ENCODE measurements at regions of chr12 and their contacts with region 1.

Region 1: GRCh38 chr12:7155481-7156034 is 25.4 kb downstream of the CLSTN3 start:
- DNase-seq: no peak
- H3K4me3 ChIP-seq: no peak overlapping the region
- H3K4me3 Mint-ChIP-seq: no peak overlapping the region
- H3K27ac Mint-ChIP-seq: no peak overlapping the region
- H3K4me1 ChIP-seq: no peaks in the 10 kb centered on the region
- H3K4me1 Mint-ChIP-seq: no peaks in the 10 kb centered on the region
- H3K27me3 ChIP-seq: no peaks in the 10 kb centered on the region
- H3K27me3 Mint-ChIP-seq: no peaks in the 10 kb centered on the region
- CTCF ChIP-seq: no peak

Region 2: GRCh38 chr12:6607751-6608591 is 547.6 kb before region 1 on chr12:
- CTCF ChIA-PET with region 1: no interaction called
- POLR2A ChIA-PET with region 1: no interaction called
- intact Hi-C with region 1: no loop called
- DNase-seq: peak; percentile 76 to 87
- H3K4me3 ChIP-seq: peak overlapping the region; percentile 86
- H3K4me3 Mint-ChIP-seq: no peak overlapping the region
- H3K27ac Mint-ChIP-seq: no peak overlapping the region
- H3K4me1 ChIP-seq: peaks cover 38% of the 10 kb centered on the region
- H3K4me1 Mint-ChIP-seq: peaks cover 20% of the 10 kb centered on the region
- H3K27me3 ChIP-seq: no peaks in the 10 kb centered on the region
- H3K27me3 Mint-ChIP-seq: no peaks in the 10 kb centered on the region
- CTCF ChIP-seq: no peak

Region 3: DNA sequence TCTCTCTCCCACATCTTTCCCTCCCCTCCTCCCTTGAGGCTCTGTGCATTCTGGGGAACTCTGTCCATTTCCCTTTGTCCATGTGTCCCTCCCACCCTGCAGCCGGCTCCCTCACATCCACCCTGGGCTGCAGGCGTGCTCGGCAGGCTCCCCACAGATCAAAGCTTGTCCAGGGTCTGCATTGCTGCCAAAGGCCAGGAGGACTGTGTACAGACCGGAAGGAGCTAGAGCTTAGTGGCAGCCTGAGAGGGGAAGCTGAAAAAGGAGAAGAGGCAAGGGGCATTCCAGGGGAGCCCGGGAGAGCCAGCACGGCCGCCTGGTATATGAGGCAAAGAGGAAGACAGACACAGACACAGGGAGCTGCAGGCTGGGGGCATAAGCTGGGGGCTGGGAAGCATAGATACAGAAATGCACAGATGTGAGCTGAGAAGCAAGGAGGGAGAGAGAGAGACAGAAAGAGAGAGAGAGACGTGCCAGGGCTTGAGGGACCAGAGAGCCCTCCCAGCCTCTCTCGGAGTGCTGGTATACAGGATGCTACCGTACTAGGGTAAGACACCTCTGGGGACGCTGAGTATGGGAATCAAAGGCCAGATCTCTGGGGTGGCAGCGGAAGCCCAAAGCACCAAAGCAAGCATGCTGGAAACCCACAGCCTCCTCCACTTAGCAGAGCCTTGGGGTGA is 362.9 kb before region 1 on chr12:
- CTCF ChIA-PET with region 1: no interaction called
- POLR2A ChIA-PET with region 1: no interaction called
- intact Hi-C with region 1: no loop called
- DNase-seq: no peak
- H3K4me3 ChIP-seq: no peak overlapping the region
- H3K4me3 Mint-ChIP-seq: no peak overlapping the region
- H3K27ac Mint-ChIP-seq: no peak overlapping the region
- H3K4me1 ChIP-seq: no peaks in the 10 kb centered on the region
- H3K4me1 Mint-ChIP-seq: peaks cover 20% of the 10 kb centered on the region
- H3K27me3 ChIP-seq: no peaks in the 10 kb centered on the region
- H3K27me3 Mint-ChIP-seq: no peaks in the 10 kb centered on the region
- CTCF ChIP-seq: no peak

Region 4: DNA sequence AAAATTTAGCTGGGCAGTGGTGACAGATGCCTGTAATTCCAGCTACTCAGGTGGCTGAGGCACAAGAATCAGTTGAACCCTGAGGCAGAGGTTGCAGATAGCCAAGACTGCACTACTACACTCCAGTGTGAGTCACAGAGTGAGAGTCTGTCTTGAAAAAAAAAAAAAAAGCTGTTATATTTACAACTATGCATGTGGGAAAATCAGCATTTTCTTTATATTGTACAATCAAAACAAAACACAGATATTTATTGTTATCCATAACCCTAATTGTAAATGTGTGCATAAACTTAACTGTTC is 75.8 kb before region 1 on chr12:
- CTCF ChIA-PET with region 1: no interaction called
- POLR2A ChIA-PET with region 1: interaction called, 11 read pairs
- intact Hi-C with region 1: no loop called
- DNase-seq: no peak
- H3K4me3 ChIP-seq: no peak overlapping the region
- H3K4me3 Mint-ChIP-seq: no peak overlapping the region
- H3K27ac Mint-ChIP-seq: no peak overlapping the region
- H3K4me1 ChIP-seq: peaks cover 21% of the 10 kb centered on the region
- H3K4me1 Mint-ChIP-seq: peaks cover 7% of the 10 kb centered on the region
- H3K27me3 ChIP-seq: no peaks in the 10 kb centered on the region
- H3K27me3 Mint-ChIP-seq: no peaks in the 10 kb centered on the region
- CTCF ChIP-seq: no peak